HEK293 (cell line): ENCODE measurements at regions of chr5 and their contacts with region 1.

Region 1: GRCh38 chr5:80255732-80256479 is at the start of gene SERINC5:
- H3K4me3 ChIP-seq: peak within 1 kb of the TSS; percentile 53
- H3K27ac ChIP-seq: peak within 1 kb of the TSS; percentile 81
- H3K4me1 ChIP-seq: no peaks in the 10 kb centered on the region
- CTCF ChIP-seq: no peak

Region 2: GRCh38 chr5:80268916-80269315 is 13.0 kb after region 1 on chr5:
- CTCF ChIA-PET with region 1: interaction called, 5 read pairs
- POLR2A ChIA-PET with region 1: interaction called, 15 read pairs
- H3K4me3 ChIP-seq: no peak overlapping the region
- H3K27ac ChIP-seq: no peak overlapping the region
- H3K4me1 ChIP-seq: no peaks in the 10 kb centered on the region
- CTCF ChIP-seq: no peak